ENCODE measurements at regions of chr9 and their contacts with region 1.

Region 1: GRCh38 chr9:33290247-33291030 is at the start of gene NFX1:
- DNase-seq: peak; percentile 99
- ATAC-seq: peak; percentile 96
- total RNA-seq, gene NFX1: 29.3 TPM

Region 2: GRCh38 chr9:33264473-33265177 is 25.8 kb before region 1 on chr9 and contains the starts of genes BAG1 and CHMP5:
- intact Hi-C with region 1: loop called (anchors 1 kb)
- DNase-seq: peak; percentile 100
- ATAC-seq: peak; percentile 99
- total RNA-seq, gene BAG1: 132 TPM
- total RNA-seq, gene CHMP5: 51.5 TPM

Region 3: DNA sequence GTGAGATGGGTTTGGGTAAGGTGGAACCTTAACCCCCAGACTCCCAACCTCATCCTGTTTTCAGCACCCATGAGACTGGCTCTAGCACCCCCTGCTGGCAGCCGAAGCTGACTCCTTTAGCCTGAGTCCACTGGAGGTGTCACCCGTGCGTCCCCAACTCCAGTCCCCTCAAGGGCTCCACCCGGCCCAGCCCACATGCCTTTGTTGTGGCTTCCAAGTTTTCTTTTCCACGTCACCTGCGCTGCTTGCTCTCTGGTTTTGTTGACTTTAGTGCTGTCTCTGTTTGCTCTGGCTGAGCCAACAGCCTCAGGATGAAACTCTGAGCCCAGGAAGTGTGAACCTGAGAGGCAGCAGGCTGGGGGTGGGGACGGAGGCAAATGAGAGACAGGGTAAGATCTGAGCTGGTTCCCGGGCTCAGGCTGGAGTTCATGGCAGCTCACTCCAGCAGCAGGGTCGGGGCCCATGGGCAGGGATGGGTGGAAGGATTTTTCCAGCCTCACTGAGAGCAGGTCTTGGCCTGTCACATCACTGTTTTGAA is 125.1 kb after region 1 on chr9:
- intact Hi-C with region 1: loop called (anchors 1 kb)
- DNase-seq: peak; percentile 84
- ATAC-seq: peak; percentile 70

Region 4: GRCh38 chr9:33473643-33474352 is 183.4 kb after region 1 on chr9 and contains the start of gene NOL6:
- intact Hi-C with region 1: loop called (anchors 5 kb)
- DNase-seq: peak; percentile 96
- ATAC-seq: peak; percentile 100
- total RNA-seq, gene NOL6: 13.0 TPM

Region 5: DNA sequence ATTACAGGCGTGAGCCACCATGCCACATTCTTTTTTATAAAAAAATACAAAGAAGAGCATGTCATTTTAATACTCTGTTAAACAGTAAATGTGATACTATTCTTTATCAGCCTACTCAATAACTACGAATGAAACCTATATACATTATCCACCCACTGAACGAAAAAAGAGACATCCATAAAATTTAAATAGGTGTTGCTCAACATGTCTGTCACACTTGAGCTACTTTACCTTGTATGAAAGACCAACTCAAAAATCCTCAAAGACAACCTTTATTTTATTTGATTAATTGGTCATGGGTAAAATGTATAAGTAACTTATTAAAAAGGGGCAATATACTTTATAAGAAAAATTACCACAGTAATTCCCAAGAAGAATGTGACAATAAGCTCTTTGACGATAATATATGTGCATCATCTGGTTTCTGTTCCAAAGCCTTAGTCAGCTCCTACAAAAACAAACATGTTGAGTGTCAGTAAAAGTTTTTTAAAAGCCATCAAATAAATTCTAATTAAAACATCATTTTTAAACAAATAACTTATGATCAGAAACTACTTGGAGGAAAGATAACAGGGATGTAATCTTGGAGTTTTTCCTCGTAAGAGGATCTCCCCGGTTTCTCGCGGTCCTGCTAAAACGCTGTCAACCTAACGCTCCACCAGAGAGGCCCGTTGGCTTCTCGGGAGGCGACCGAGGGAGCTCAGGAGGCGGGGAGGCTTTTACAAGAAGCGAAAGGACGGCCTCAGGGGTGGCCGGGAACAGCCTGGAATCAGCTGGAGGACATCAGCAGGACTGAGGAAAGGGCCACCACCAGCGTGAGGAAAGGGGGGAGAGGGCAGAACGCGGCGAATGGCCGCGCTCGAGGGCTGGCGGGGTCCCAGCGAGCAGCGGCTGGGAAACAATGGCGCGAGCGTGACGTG is 220.1 kb after region 1 on chr9:
- intact Hi-C with region 1: loop called (anchors 10 kb)
- DNase-seq: peak; percentile 85
- ATAC-seq: peak; percentile 95

Region 6: DNA sequence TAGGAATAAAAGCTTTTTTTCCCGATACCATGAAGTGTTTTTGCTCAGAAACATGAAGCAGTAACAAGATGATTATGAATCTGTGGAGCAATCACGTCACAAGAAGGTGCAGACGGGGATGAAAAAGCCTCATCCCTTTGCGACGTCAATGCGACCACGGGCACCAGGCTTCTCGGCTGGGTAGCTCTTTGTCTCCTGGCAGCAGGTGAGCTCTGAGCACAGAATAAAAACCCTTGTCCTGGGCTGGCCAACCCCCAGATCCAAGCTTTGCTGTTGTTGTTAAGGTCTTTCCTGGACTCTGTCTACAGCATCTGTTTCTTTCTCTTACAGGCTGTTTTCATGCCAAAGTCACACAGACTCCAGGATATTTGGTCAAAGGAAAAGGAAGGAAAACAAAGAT is 347.4 kb after region 1 on chr9:
- intact Hi-C with region 1: no loop called
- DNase-seq: no peak
- ATAC-seq: no peak

Region 7: DNA sequence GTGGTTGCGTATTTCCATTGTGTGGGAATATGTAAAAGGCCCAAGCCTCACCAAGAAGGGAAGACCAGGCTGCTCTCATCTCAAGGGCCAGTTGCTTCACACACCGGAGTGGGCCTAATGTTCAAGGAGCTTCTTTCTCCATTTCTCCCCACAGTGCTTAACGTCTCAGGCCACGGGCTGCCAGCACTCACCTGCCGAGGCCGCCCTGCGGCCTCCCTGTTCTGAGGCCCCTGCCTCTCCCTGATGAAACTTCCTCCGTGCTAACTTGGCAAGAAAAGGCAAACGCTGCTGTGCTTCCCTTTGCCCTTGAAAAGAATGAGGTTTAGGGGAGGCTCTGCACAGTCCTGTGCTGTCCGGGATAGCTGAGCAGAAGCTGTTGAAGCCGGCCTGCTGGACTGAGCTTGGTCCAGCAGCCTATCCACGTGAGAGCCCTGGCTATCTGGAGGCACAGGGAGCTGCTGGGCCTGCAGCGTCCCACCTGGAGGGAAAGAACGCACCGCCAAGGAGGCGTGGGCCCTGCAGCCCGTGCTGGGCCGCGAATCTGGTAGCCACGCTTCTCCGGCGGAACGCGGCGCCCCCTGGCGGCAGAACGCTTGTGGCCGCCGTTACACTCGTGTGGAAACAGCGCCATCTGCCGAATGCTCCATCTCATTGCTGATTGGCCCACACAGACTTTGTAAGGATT is 431.4 kb after region 1 on chr9:
- intact Hi-C with region 1: loop called (anchors 10 kb)
- DNase-seq: peak; percentile 94
- ATAC-seq: peak; percentile 87